Thyroid gland (tissue), 4 donors: ENCODE measurements at regions of chr17 and their contacts with region 1.

Region 1: GRCh38 chr17:50783193-50783660 is 15.9 kb upstream of the ANKRD40CL start:
- DNase-seq: peak; percentile 82 to 85
- H3K4me3 ChIP-seq: no peak overlapping the region
- H3K27ac ChIP-seq: no peak overlapping the region
- H3K4me1 ChIP-seq: peaks cover 9 to 21% of the 10 kb centered on the region in 2 donors
- H3K27me3 ChIP-seq: no peaks in the 10 kb centered on the region
- CTCF ChIP-seq: peak; percentile 91 to 99 (median 98)
- POLR2A ChIP-seq: no peak

Region 2: DNA sequence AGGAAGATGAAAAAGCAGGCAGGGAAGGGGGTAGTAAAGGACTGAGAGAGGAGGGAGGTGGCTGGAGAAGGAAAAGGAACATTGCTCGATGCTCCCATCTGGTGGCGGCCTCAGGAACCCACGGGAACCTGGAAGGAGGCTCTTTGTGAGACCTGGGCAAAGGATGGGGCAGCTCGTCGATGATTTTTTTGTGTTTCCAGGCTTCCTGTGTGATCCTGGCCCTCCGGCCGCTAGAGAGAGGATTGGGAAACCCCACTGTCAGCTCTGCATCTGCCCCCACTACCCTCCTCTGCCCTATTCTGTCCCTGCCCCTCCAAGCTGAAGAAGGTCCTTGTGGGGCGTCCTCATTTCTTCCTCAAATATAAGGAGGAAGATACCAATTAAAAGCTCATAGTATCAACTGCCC is 58.7 kb after region 1 on chr17:
- intact Hi-C with region 1: loop called (anchors 2 kb)
- DNase-seq: peak; percentile 64 to 72
- H3K4me3 ChIP-seq: no peak overlapping the region
- H3K27ac ChIP-seq: no peak overlapping the region
- H3K4me1 ChIP-seq: no peaks in the 10 kb centered on the region
- H3K27me3 ChIP-seq: no peaks in the 10 kb centered on the region
- CTCF ChIP-seq: peak; percentile 44 to 91 (median 79)
- POLR2A ChIP-seq: no peak